Caco-2 (cell line): ENCODE measurements at regions of chrX and their contacts with region 1.

Region 1: GRCh38 chrX:154515878-154516655 is at the start of gene FAM3A:
- DNase-seq: peak; percentile 92
- H3K4me3 ChIP-seq: peak within 1 kb of the TSS; percentile 79
- H3K4me3 Mint-ChIP-seq: peak within 1 kb of the TSS; percentile 88
- H3K27ac Mint-ChIP-seq: peak within 1 kb of the TSS; percentile 89
- H3K4me1 ChIP-seq: peaks cover 10% of the 10 kb centered on the region
- H3K4me1 Mint-ChIP-seq: peaks cover 6% of the 10 kb centered on the region
- H3K27me3 ChIP-seq: no peaks in the 10 kb centered on the region
- H3K27me3 Mint-ChIP-seq: no peaks in the 10 kb centered on the region
- CTCF ChIP-seq: no peak
- total RNA-seq, gene FAM3A: 23.0 and 27.3 TPM in 2 replicates

Region 2: DNA sequence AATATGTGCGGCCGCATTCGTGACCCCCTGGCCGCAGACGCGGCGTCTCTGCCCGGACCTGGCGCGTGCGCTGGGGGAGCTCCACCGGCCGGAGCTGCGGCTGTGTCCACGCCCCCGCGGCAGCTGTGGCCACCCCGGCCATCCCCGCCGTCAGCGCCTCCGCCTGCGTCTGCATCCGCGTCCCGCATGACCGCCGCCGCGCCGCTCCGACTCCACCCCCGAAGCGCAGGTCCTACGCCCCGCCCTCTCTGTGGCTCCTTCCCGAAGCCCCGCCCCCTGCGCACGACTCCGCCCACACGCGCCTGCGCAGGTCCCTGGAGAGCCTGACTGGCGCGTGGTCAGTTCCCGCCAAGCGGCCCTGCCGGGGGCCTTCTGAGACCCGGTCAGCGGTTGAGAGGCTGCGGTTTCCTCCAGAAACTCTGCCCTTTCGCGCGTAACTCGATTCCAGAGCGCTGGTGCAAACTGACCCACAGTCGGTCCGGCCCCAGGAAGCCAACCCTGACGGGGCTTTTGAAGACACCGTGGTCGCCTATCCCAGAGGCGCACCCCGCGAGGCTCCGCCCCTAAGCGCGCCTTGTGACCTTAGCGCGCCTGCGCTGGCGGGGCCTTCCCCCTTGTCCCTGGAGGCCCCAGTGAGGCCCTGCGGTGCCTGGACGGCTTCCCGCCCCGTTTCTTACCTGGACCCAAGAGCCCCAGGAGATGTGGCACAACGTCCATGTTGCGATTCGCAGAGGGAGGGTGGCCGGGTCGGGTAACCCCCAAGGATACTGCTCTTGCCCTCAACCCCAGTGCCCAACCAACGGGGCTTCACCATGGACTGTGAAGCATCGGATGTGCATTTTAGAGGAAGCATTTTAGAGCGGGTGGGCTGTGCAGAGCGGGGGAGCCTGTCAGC is 37.1 kb before region 1 on chrX and contains the start of gene LAGE3:
- CTCF ChIA-PET with region 1: no interaction called
- POLR2A ChIA-PET with region 1: no interaction called
- intact Hi-C with region 1: loop called (anchors 5 kb)
- DNase-seq: peak; percentile 91 to 96
- H3K4me3 ChIP-seq: peak within 1 kb of the TSS; percentile 64
- H3K4me3 Mint-ChIP-seq: peak within 1 kb of the TSS; percentile 76
- H3K27ac Mint-ChIP-seq: peak within 1 kb of the TSS; percentile 86
- H3K4me1 ChIP-seq: no peaks in the 10 kb centered on the region
- H3K4me1 Mint-ChIP-seq: no peaks in the 10 kb centered on the region
- H3K27me3 ChIP-seq: no peaks in the 10 kb centered on the region
- H3K27me3 Mint-ChIP-seq: no peaks in the 10 kb centered on the region
- CTCF ChIP-seq: no peak
- total RNA-seq, gene LAGE3: 26.0 and 26.7 TPM in 2 replicates

Region 3: DNA sequence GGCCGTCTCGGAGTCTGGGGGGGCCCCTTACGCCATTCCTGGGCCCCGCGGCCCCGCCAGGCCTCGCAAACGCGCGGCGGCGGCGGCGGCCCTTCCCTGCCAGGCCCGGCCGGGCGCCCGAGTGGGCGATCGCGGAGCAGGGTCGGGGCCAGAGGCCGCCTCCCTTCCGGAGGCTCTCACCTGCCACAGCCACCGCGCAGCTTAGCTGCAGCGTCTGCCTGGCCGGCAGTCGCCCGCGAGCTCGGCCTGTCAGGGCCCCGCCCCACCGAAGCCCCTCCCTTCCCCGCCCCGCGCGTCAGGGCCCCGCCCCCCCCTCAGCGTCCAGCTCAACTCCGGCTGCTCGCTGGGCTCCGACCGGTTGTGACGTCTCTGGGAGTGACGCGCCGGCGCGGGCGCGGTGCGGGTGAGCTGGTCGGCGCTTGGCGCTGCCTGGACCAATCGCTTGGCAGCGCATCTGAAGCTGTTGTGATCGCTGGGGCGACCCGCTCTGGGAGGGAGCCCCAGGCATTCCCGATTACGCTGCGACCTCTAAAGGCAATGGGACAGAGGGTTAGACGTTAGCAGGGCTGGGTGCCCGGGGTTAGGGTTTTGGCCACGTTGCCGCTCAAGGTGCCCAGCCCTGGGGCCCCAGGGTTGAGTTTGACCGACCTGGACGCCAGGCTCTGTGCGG is 25.5 kb before region 1 on chrX and contains the start of gene SLC10A3:
- CTCF ChIA-PET with region 1: interaction called, 5 read pairs
- POLR2A ChIA-PET with region 1: interaction called, 8 read pairs
- intact Hi-C with region 1: loop called (anchors 1 kb)
- DNase-seq: peak; percentile 94 to 95
- H3K4me3 ChIP-seq: peak within 1 kb of the TSS; percentile 57
- H3K4me3 Mint-ChIP-seq: peak within 1 kb of the TSS; percentile 73
- H3K27ac Mint-ChIP-seq: peak within 1 kb of the TSS; percentile 92
- H3K4me1 ChIP-seq: peaks cover 4% of the 10 kb centered on the region; the same call in 1 of the 2 replicates
- H3K4me1 Mint-ChIP-seq: peaks cover 6% of the 10 kb centered on the region
- H3K27me3 ChIP-seq: no peaks in the 10 kb centered on the region
- H3K27me3 Mint-ChIP-seq: no peaks in the 10 kb centered on the region
- CTCF ChIP-seq: peak in 1 of 2 experiments; percentile 15
- total RNA-seq, gene SLC10A3: 19.6 and 22.5 TPM in 2 replicates

Region 4: DNA sequence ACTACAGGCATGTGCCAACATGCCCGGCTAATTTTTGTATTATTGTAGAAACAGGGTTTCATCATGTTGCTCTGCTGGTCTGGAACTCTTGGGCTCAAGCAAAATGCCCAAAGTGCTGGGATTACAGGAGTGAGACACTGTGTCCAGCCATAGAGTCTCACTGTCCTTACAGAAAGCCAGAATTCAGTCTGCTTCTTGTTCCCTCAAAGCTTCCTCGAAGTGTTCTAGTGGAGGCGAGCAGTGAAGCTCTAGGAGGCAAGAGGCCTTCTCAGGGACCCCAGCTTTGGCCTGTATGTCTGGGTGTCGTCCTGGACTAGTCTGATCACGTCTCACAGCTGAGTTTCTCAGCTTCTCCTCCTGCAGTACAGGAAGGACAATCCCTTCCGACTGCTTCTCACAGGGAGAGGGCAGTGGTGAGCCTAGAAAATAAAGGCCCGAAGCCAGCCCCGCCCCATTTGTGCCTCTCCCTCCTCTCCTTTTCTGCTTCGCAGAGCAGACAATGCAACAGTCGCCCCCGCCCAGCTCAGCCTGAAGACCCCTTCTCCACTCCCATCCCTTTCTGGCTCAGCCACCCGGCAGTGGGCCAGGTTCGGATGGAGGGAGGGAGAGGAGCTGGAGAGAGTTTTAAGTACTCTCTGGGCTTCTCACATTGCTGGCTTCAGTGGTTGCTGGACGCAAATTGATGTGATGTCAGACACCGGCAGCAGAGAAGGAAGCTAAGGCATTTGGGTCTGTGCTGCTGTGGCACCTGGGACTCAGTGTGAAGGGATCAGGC is 11.0 kb after region 1 on chrX:
- CTCF ChIA-PET with region 1: interaction called, 3 read pairs
- POLR2A ChIA-PET with region 1: interaction called, 4 read pairs
- intact Hi-C with region 1: loop called (anchors 1 kb)
- DNase-seq: peak; percentile 76 to 78
- H3K4me3 ChIP-seq: peak overlapping the region; percentile 6; the same call in 1 of the 2 replicates
- H3K4me3 Mint-ChIP-seq: peak overlapping the region; percentile 55
- H3K27ac Mint-ChIP-seq: no peak overlapping the region
- H3K4me1 ChIP-seq: peaks cover 14% of the 10 kb centered on the region
- H3K4me1 Mint-ChIP-seq: peaks cover 7% of the 10 kb centered on the region
- H3K27me3 ChIP-seq: no peaks in the 10 kb centered on the region
- H3K27me3 Mint-ChIP-seq: no peaks in the 10 kb centered on the region
- CTCF ChIP-seq: peak; percentile 29 to 55

Region 5: GRCh38 chrX:154547245-154548027 is 31.4 kb after region 1 on chrX and contains the start of gene IKBKG:
- CTCF ChIA-PET with region 1: no interaction called
- POLR2A ChIA-PET with region 1: no interaction called
- intact Hi-C with region 1: loop called (anchors 1 kb)
- DNase-seq: peak; percentile 90 to 92
- H3K4me3 ChIP-seq: peak within 1 kb of the TSS; percentile 76
- H3K4me3 Mint-ChIP-seq: peak within 1 kb of the TSS; percentile 99
- H3K27ac Mint-ChIP-seq: peak within 1 kb of the TSS; percentile 95
- H3K4me1 ChIP-seq: no peaks in the 10 kb centered on the region; the same call in 1 of the 2 replicates
- H3K4me1 Mint-ChIP-seq: peaks cover 10% of the 10 kb centered on the region
- H3K27me3 ChIP-seq: no peaks in the 10 kb centered on the region
- H3K27me3 Mint-ChIP-seq: no peaks in the 10 kb centered on the region
- CTCF ChIP-seq: no peak
- total RNA-seq, gene IKBKG: 28.6 and 29.3 TPM in 2 replicates